ENCODE measurements at regions of chr7 and their contacts with region 1.

Region 1: DNA sequence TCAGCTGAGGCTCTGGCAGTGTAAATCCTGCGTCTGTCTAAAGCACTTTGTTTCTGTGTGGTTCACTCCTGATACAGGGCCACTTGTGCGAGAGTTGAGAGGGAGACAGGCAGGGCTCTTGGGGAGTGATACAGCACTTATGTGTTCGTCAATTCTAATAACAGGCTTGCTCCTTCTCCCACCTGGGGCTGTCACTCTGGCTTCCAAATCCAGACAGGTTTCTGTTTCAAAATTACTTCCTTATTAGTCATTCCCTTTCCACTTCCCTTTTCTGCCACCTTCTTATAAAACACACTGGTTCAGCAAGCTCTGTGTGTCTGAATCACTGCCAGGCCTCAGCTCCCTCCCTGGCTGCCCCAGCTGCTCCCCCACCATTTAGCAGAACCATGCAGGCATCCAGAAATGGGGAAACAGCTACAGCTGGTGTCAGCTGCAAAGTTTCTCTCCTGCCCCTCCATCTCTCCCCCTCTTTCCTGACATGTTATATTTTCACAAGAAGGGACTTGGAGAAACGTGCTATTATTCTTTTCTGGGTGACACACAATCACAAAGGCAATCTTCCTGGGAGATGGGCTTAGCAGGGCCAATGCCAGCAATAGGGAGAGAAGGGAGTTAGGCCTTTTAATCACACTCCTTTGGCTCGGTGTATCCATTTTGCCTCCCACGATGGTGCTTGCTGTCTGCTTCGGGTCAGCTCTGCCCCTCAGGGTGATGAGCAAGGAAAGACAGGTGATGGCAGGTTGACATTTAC is 58.4 kb upstream of the ZNRF2 start:
- DNase-seq: peak; percentile 97 to 99 (median 99)
- H3K4me3 ChIP-seq: peak overlapping the region in 1 of 3 experiments; percentile 45
- H3K4me3 Mint-ChIP-seq: peak overlapping the region; percentile 28 to 87
- H3K27ac ChIP-seq: peak overlapping the region; percentile 89 to 95
- H3K27ac Mint-ChIP-seq: peak overlapping the region; percentile 97 to 99 (median 99)
- H3K4me1 ChIP-seq: peaks cover 46 to 50% of the 10 kb centered on the region in 2 donors
- H3K4me1 Mint-ChIP-seq: peaks cover 48% of the 10 kb centered on the region
- H3K27me3 ChIP-seq: no peaks in the 10 kb centered on the region
- H3K27me3 Mint-ChIP-seq: peaks cover 0 to 7% (median 3%) of the 10 kb centered on the region in 3 donors
- CTCF ChIP-seq: no peak

Region 2: GRCh38 chr7:30178748-30179436 is 47.1 kb before region 1 on chr7:
- intact Hi-C with region 1: loop called in 1 of 2 experiments (anchors 5 kb)
- DNase-seq: peak; percentile 60 to 83 (median 82)
- H3K4me3 ChIP-seq: peak overlapping the region in 1 of 3 experiments; percentile 6
- H3K4me3 Mint-ChIP-seq: peak overlapping the region; percentile 4 to 21
- H3K27ac ChIP-seq: peak overlapping the region; percentile 85 to 88
- H3K27ac Mint-ChIP-seq: peak overlapping the region; percentile 91 to 95 (median 94)
- H3K4me1 ChIP-seq: peaks cover 57 to 66% of the 10 kb centered on the region in 2 donors
- H3K4me1 Mint-ChIP-seq: peaks cover 70% of the 10 kb centered on the region
- H3K27me3 ChIP-seq: no peaks in the 10 kb centered on the region
- H3K27me3 Mint-ChIP-seq: peaks cover 0 to 1% (median 0%) of the 10 kb centered on the region in 3 donors
- CTCF ChIP-seq: no peak

Region 3: GRCh38 chr7:30184791-30185487 is 41.1 kb before region 1 on chr7:
- intact Hi-C with region 1: loop called in 1 of 2 experiments (anchors 5 kb)
- DNase-seq: peak; percentile 94 to 99 (median 97)
- H3K4me3 ChIP-seq: no peak overlapping the region
- H3K4me3 Mint-ChIP-seq: peak overlapping the region in 1 of 2 donors; percentile 19
- H3K27ac ChIP-seq: peak overlapping the region; percentile 95 to 99
- H3K27ac Mint-ChIP-seq: peak overlapping the region; percentile 97 to 99 (median 98)
- H3K4me1 ChIP-seq: peaks cover 30 to 35% of the 10 kb centered on the region in 2 donors
- H3K4me1 Mint-ChIP-seq: peaks cover 38% of the 10 kb centered on the region
- H3K27me3 ChIP-seq: no peaks in the 10 kb centered on the region
- H3K27me3 Mint-ChIP-seq: no peaks in the 10 kb centered on the region
- CTCF ChIP-seq: no peak

Measured in CD14-positive monocyte (primary cell).